ENCODE measurements at regions of chr4 and their contacts with region 1.

Region 1: DNA sequence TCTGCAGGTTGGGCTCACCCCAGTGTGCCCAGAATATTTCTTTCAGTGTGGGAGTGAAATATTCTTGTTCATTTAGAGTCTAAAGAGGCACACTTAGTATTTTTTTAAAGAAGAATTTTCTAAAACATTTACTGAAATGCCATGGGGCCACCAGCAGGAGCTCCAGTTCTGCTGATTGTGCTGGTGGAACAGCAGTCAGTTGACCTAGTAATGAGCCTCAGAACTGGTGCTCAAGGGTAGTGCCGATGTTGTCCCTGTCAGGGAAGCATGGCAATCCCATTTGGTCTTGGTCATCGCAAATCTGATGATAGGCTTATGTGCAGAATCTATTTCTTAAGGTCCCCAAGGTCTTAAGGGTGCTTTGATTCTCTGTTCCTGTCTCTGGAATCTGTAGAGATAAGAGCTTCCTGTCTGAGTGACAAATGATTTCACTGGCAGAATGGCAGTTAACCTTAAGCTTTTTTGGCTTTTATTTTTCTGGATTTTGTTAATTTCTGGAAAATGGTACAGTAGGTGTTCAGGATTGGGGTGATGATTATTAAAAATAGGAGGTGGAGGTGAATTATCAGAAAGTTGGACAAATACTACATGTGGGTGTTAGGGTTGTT is 31.3 kb downstream of the JADE1 start:
- DNase-seq: no peak
- ATAC-seq: no peak
- H3K4me3 ChIP-seq: no peak overlapping the region
- H3K27ac ChIP-seq: no peak overlapping the region
- H3K4me1 ChIP-seq: no peaks in the 10 kb centered on the region
- H3K27me3 ChIP-seq: no peaks in the 10 kb centered on the region
- CTCF ChIP-seq: peak in 1 of 3 experiments; percentile 13; a peak in 1 of 6 replicates
- EP300 ChIP-seq: no peak
- POLR2A ChIP-seq: no peak
- RAD21 ChIP-seq: peak; percentile 34; the same call in 1 of the 2 replicates

Region 2: DNA sequence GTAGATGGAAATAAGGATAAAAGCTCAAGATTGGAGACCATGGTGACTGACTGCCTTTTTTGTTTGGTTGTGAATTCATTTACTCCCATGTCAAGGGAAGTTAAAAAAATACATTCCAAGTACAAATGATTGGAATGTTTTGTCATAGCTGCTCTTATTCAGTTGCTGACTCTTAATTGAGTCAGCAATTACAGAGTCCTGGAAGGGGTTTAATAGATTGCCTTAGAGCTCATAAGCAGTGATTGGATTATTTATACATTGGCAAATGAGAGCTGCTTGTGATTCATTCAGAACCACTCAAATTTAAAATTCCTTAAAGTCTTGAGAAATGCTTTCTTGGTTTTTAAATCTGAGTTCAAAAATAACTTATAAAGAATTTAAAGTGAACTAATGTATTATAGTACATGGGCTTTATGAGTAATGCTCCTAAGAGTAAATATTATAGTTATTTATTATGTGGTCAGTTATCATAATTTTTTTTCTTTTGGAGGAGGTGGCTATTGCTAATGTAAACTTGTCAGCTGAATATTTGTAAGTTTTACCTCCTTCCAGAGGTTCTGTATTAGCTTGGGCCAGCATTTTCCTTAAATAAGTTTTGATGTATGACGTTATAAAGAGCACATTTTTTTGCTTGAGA is 17.7 kb before region 1 on chr4:
- CTCF ChIA-PET with region 1: interaction called, 4 read pairs
- POLR2A ChIA-PET with region 1: interaction called, 15 read pairs
- RAD21 ChIA-PET with region 1: interaction called, 10 read pairs
- SMC1A ChIA-PET with region 1: interaction called, 45 read pairs
- in situ Hi-C with region 1: no loop called
- intact Hi-C with region 1: no loop called
- DNase-seq: no peak
- ATAC-seq: no peak
- H3K4me3 ChIP-seq: no peak overlapping the region
- H3K27ac ChIP-seq: no peak overlapping the region
- H3K4me1 ChIP-seq: peaks cover 41% of the 10 kb centered on the region
- H3K27me3 ChIP-seq: no peaks in the 10 kb centered on the region
- CTCF ChIP-seq: no peak
- EP300 ChIP-seq: no peak
- POLR2A ChIP-seq: no peak
- RAD21 ChIP-seq: no peak

Region 3: DNA sequence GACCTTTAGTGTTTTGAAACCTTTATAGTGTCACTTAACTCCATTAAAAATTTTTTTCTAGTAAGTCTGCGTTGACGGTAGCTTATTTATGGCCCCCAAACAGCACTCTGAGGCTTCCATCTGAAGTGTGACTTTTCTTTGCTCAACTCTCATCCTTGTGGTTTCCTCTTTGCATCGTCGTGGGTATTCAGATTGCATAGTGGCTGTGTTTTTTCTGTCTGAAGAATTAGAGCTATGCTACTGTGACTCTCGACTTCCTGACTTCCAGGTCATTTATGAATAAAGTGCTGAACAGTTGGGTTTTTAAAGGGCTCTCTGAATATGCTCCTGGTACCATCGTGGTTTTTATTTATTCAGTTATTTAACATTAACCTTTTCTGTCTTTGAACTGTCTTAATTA is 13.6 kb after region 1 on chr4:
- CTCF ChIA-PET with region 1: interaction called, 7 read pairs
- POLR2A ChIA-PET with region 1: interaction called, 3 read pairs
- RAD21 ChIA-PET with region 1: no interaction called
- SMC1A ChIA-PET with region 1: interaction called, 10 read pairs
- in situ Hi-C with region 1: no loop called
- intact Hi-C with region 1: no loop called
- DNase-seq: no peak
- ATAC-seq: no peak
- H3K4me3 ChIP-seq: no peak overlapping the region
- H3K27ac ChIP-seq: no peak overlapping the region
- H3K4me1 ChIP-seq: peaks cover 5% of the 10 kb centered on the region
- H3K27me3 ChIP-seq: no peaks in the 10 kb centered on the region
- CTCF ChIP-seq: no peak
- EP300 ChIP-seq: no peak
- POLR2A ChIP-seq: no peak
- RAD21 ChIP-seq: no peak

Region 4: DNA sequence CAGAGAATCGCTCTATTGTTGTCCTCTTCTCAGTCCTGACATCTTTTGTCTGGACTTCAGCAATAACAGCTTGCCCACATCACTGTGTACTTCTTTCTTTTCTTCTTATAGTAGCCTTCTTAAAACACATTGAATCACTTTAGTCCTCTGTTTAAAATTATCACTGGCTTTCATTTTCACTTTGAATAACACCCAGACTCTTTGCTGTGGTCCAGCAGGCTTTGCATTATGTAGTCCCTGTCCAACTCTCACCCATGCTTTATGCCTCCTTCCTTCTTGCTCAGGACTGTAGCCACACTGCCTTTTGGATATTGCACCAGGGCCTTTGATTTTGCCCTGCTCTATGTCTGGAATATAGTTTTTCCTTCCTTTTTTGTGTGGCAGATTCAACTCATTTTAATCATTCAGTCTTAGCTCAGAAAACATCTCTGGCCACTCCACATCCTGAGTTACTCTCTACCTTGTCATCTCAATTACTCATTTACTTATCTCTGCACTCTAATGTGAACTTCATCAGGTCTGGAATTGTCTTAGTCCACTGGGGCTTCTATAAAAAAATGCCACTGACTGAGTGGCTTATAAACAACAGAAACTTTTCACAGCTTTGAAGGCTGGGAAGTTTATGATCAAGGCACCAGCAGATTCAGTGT is 423.3 kb after region 1 on chr4:
- CTCF ChIA-PET with region 1: no interaction called
- POLR2A ChIA-PET with region 1: no interaction called
- RAD21 ChIA-PET with region 1: no interaction called
- SMC1A ChIA-PET with region 1: no interaction called
- in situ Hi-C with region 1: no loop called
- intact Hi-C with region 1: no loop called
- DNase-seq: peak; percentile 30
- ATAC-seq: peak; percentile 98
- H3K4me3 ChIP-seq: no peak overlapping the region
- H3K27ac ChIP-seq: 0 out of 2 replicates have a peak overlapping the region, but pooled peaks have one; percentile 12
- H3K4me1 ChIP-seq: peaks cover 9% of the 10 kb centered on the region; the same call in 1 of the 2 replicates
- H3K27me3 ChIP-seq: no peaks in the 10 kb centered on the region
- CTCF ChIP-seq: no peak
- EP300 ChIP-seq: no peak
- POLR2A ChIP-seq: no peak
- RAD21 ChIP-seq: no peak

Measured in GM12878 (cell line).